ENCODE measurements at regions of chr15 and their contacts with region 1.

Region 1: GRCh38 chr15:80567721-80568157 is 127.4 kb upstream of the ABHD17C start:
- DNase-seq: peak; percentile 45
- ATAC-seq: peak; percentile 84 to 89

Region 2: GRCh38 chr15:80455668-80456442 is 111.9 kb before region 1 on chr15:
- intact Hi-C with region 1: loop called in 1 of 2 experiments (anchors 5 kb)
- DNase-seq: peak; percentile 42
- ATAC-seq: peak; percentile 79 to 81

Region 3: GRCh38 chr15:80679167-80680131 is 111.7 kb after region 1 on chr15:
- intact Hi-C with region 1: loop called in 1 of 2 experiments (anchors 10 kb)
- DNase-seq: no peak
- ATAC-seq: no peak

Region 4: DNA sequence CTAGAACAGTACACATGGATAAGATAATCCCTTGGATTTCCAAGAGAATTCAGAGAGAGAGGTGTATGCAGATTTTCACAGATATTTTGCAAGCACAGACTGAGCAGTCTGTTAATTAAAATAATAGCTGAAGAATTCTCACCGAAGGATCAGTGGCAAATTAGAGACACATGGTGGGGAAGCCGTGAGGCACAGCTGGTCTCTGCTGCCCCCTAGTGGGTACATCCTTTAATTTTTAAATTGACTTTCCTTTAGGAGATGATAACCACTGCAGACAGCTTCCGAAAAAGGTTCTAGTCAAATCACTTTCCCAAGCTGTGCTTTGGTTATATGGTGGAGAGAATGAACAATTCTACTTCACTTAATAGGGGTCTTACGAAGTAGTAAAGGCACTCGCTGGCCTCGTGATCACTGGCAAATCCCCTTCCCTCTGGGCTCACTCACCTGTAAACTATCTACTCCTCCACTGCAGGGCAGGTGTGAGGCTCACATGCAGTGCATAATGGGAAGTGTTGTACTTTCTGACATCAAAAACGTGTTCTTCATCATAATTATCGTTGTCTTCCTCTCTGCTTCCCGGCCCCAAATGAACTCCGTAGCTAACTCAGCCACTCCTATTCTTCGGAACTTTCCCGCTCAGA is 402.4 kb after region 1 on chr15:
- intact Hi-C with region 1: loop called (anchors 2 to 10 kb)
- DNase-seq: peak; percentile 55
- ATAC-seq: peak; percentile 59 to 72